ENCODE measurements at regions of chr2 and their contacts with region 1.

Region 1: GRCh38 chr2:136665736-136666135 is 99.6 kb upstream of the THSD7B start:
- DNase-seq: no peak
- H3K4me3 Mint-ChIP-seq: no peak overlapping the region
- H3K27ac Mint-ChIP-seq: no peak overlapping the region
- H3K4me1 Mint-ChIP-seq: no peaks in the 10 kb centered on the region
- H3K27me3 Mint-ChIP-seq: no peaks in the 10 kb centered on the region
- CTCF ChIP-seq: no peak

Region 2: GRCh38 chr2:136154402-136154783 is 511.3 kb before region 1 on chr2:
- CTCF ChIA-PET with region 1: no interaction called
- intact Hi-C with region 1: no loop called
- DNase-seq: no peak
- H3K4me3 Mint-ChIP-seq: no peak overlapping the region
- H3K27ac Mint-ChIP-seq: no peak overlapping the region
- H3K4me1 Mint-ChIP-seq: no peaks in the 10 kb centered on the region
- H3K27me3 Mint-ChIP-seq: no peaks in the 10 kb centered on the region
- CTCF ChIP-seq: no peak

Region 3: DNA sequence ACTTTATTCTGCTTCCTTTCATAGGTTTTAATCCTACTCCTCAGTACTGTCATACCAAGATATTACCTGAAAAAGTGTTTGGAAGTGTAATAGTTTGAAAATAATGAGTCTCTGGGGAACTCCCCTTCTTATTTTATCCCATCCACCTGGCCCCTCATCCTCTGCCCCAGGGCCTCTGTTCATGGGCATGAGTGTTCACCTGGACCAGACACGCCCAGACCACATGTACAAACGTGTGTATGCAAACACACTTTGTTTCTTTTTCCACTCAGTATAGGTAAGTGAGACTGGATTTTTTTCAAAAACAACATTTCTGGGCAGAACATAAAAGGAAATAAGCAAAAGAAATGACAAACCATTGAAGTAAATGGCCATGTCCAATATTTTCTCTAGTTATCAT is 37.5 kb after region 1 on chr2:
- CTCF ChIA-PET with region 1: no interaction called
- intact Hi-C with region 1: loop called (anchors 2 kb)
- DNase-seq: no peak
- H3K4me3 Mint-ChIP-seq: no peak overlapping the region
- H3K27ac Mint-ChIP-seq: no peak overlapping the region
- H3K4me1 Mint-ChIP-seq: no peaks in the 10 kb centered on the region
- H3K27me3 Mint-ChIP-seq: no peaks in the 10 kb centered on the region
- CTCF ChIP-seq: no peak